ENCODE measurements at regions of chr18 and their contacts with region 1.

Region 1: GRCh38 chr18:41197967-41198366 is 757.1 kb upstream of the PIK3C3 start:
- DNase-seq: no peak
- H3K4me3 ChIP-seq: no peak overlapping the region
- H3K27ac ChIP-seq: no peak overlapping the region
- H3K4me1 ChIP-seq: no peaks in the 10 kb centered on the region
- H3K27me3 ChIP-seq: no peaks in the 10 kb centered on the region
- CTCF ChIP-seq: no peak
- POLR2A ChIP-seq: no peak

Region 2: GRCh38 chr18:39618265-39619003 is 1579.5 kb before region 1 on chr18:
- intact Hi-C with region 1: loop called (anchors 5 kb)
- DNase-seq: no peak
- H3K4me3 ChIP-seq: no peak overlapping the region
- H3K27ac ChIP-seq: no peak overlapping the region
- H3K4me1 ChIP-seq: no peaks in the 10 kb centered on the region
- H3K27me3 ChIP-seq: no peaks in the 10 kb centered on the region
- CTCF ChIP-seq: no peak
- POLR2A ChIP-seq: no peak

Measured in breast epithelium (tissue), 4 donors.